T-cell (primary cell): ENCODE measurements at regions of chr3 and their contacts with region 1.

Region 1: DNA sequence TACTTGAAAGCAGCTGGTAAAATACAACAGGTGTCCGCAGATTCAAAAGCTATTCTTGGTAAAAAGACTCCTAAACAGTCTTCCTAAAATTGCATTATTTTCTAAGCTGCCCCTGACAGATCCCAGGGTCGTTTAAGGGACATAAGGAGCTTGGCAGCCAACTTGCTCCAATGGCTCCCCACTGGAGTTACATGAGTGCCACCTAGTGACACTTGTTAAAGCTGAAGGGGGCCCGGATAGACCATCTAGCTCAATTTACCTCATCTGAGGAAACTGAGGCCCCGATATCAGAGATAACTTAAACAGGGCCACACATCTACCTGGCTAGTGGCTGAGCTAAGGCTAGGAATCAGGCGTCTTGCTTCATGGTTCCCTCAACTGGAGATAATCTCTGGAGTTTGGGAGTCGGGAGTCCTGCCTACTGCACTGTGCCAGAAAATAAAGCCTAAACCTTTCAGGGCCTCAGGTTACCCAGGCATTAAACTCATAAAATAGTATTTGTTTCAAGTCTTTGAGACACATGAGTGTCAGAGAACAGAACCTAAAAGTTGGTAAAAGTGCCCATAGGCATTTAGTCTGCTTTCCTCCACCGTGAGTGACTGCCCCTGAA is 6.5 kb upstream of the TBC1D23 start:
- DNase-seq: peak in 14 of 35 experiments; percentile 3 to 61 (median 14)
- ATAC-seq: peak in 3 of 4 experiments; percentile 65 to 76 (median 71)
- H3K4me3 ChIP-seq: no peak overlapping the region
- H3K4me3 Mint-ChIP-seq: no peak overlapping the region
- H3K27ac ChIP-seq: no peak overlapping the region
- H3K27ac Mint-ChIP-seq: no peak overlapping the region
- H3K4me1 ChIP-seq: no peaks in the 10 kb centered on the region
- H3K4me1 Mint-ChIP-seq: peaks cover 0 to 10% (median 5%) of the 10 kb centered on the region in 3 donors
- H3K27me3 ChIP-seq: no peaks in the 10 kb centered on the region
- H3K27me3 Mint-ChIP-seq: no peaks in the 10 kb centered on the region

Region 2: DNA sequence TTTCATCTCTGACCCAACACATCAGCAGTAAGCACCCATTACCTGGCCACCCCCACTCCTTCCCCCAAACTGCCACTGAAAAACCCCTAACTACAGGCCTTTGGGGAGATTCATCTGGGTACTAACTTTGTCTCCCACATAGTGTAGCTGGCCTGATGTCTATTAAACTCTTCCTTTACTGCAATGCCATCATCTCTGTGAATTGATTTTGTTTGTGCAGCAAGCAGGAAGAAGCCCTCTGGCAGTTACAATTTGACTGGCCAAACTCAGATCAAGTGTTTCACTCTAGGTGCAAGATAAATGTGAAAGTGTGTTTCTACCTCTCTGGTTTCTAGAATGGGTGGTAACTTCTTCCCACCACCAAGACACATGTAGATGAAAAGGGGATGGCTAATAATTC is 1927.3 kb before region 1 on chr3:
- CTCF ChIA-PET with region 1: no interaction called
- POLR2A ChIA-PET with region 1: no interaction called
- DNase-seq: no peak
- ATAC-seq: no peak
- H3K4me3 ChIP-seq: no peak overlapping the region
- H3K4me3 Mint-ChIP-seq: no peak overlapping the region
- H3K27ac ChIP-seq: no peak overlapping the region
- H3K27ac Mint-ChIP-seq: no peak overlapping the region
- H3K4me1 ChIP-seq: peaks cover 0 to 6% of the 10 kb centered on the region in 2 experiments
- H3K4me1 Mint-ChIP-seq: no peaks in the 10 kb centered on the region
- H3K27me3 ChIP-seq: peaks cover 0 to 9% of the 10 kb centered on the region in 2 experiments
- H3K27me3 Mint-ChIP-seq: peaks cover 12 to 31% of the 10 kb centered on the region in 2 donors

Region 3: GRCh38 chr3:100068826-100069225 is 185.4 kb before region 1 on chr3:
- CTCF ChIA-PET with region 1: interaction called, 17 to 39 read pairs
- POLR2A ChIA-PET with region 1: interaction called in 1 of 2 experiments, 7 read pairs
- DNase-seq: peak; percentile 49 to 80 (median 70)
- ATAC-seq: peak; percentile 77 to 97 (median 85)
- H3K4me3 ChIP-seq: no peak overlapping the region
- H3K4me3 Mint-ChIP-seq: no peak overlapping the region
- H3K27ac ChIP-seq: no peak overlapping the region
- H3K27ac Mint-ChIP-seq: no peak overlapping the region
- H3K4me1 ChIP-seq: peaks cover 12 to 17% of the 10 kb centered on the region in 2 experiments
- H3K4me1 Mint-ChIP-seq: peaks cover 24 to 32% (median 31%) of the 10 kb centered on the region in 3 donors
- H3K27me3 ChIP-seq: no peaks in the 10 kb centered on the region
- H3K27me3 Mint-ChIP-seq: no peaks in the 10 kb centered on the region

Region 4: DNA sequence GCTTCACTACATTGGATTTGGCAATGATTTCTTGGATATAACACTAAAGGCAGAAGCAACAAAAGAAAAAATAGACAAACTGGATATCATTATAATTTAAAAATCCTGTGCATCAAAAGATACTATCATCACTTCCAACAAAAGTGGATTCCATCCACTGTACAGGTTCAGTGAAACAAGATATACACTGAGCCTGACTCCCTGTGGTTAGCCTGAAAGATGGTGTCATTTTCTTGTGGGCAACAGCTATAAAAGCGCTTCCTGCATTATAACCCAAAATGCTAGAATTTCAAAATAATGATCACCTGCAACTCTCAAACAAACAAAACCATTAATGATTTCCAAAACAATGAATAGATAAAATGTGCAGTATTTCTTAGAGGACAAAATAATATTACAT is 33.1 kb before region 1 on chr3:
- CTCF ChIA-PET with region 1: interaction called in 1 of 2 experiments, 14 read pairs
- POLR2A ChIA-PET with region 1: no interaction called
- DNase-seq: no peak
- ATAC-seq: no peak
- H3K4me3 ChIP-seq: no peak overlapping the region
- H3K4me3 Mint-ChIP-seq: no peak overlapping the region
- H3K27ac ChIP-seq: no peak overlapping the region
- H3K27ac Mint-ChIP-seq: no peak overlapping the region
- H3K4me1 ChIP-seq: no peaks in the 10 kb centered on the region
- H3K4me1 Mint-ChIP-seq: no peaks in the 10 kb centered on the region
- H3K27me3 ChIP-seq: no peaks in the 10 kb centered on the region
- H3K27me3 Mint-ChIP-seq: peaks cover under 1 to 9% of the 10 kb centered on the region in 2 donors

Region 5: DNA sequence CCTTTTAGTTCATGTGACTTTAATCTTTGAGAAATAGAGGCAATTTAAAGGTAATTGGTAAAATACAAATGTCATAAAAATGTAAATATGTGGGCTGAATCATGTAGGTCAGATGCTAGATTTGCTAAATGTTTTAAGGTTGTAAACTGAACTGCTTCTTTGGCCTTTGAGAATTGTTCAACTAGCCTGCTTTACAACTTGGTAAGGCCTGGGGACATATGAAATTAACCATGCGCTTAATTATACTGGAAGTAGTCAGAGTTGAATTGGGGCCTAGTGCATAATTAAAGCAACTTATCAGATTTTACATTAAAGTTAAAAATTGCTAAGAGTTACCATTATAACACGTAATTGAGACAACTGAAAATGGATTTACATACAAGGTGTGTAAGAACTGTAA is 217.2 kb after region 1 on chr3:
- CTCF ChIA-PET with region 1: no interaction called
- POLR2A ChIA-PET with region 1: no interaction called
- DNase-seq: no peak
- ATAC-seq: no peak
- H3K4me3 ChIP-seq: no peak overlapping the region
- H3K4me3 Mint-ChIP-seq: no peak overlapping the region
- H3K27ac ChIP-seq: no peak overlapping the region
- H3K27ac Mint-ChIP-seq: no peak overlapping the region
- H3K4me1 ChIP-seq: no peaks in the 10 kb centered on the region
- H3K4me1 Mint-ChIP-seq: peaks cover 2 to 5% (median 3%) of the 10 kb centered on the region in 3 donors
- H3K27me3 ChIP-seq: no peaks in the 10 kb centered on the region
- H3K27me3 Mint-ChIP-seq: peaks cover 0 to 8% of the 10 kb centered on the region in 2 donors